CD4-positive, alpha-beta T cell (primary cell): ENCODE measurements at regions of chr20 and their contacts with region 1.

Region 1: GRCh38 chr20:62237801-62238571 is at the start of gene OSBPL2:
- DNase-seq: peak; percentile 100
- ATAC-seq: peak; percentile 98
- H3K4me3 ChIP-seq: peak within 1 kb of the TSS; percentile 64
- H3K4me3 Mint-ChIP-seq: peak within 1 kb of the TSS; percentile 92
- H3K27ac ChIP-seq: peak within 1 kb of the TSS; percentile 32 to 57
- H3K27ac Mint-ChIP-seq: peak within 1 kb of the TSS; percentile 95
- H3K4me1 ChIP-seq: peaks cover 36% of the 10 kb centered on the region
- H3K4me1 Mint-ChIP-seq: peaks cover 43% of the 10 kb centered on the region
- H3K27me3 ChIP-seq: no peaks in the 10 kb centered on the region
- H3K27me3 Mint-ChIP-seq: peaks cover 9% of the 10 kb centered on the region
- CTCF ChIP-seq: no peak
- total RNA-seq, gene OSBPL2: 52.8 to 54.4 TPM

Region 2: GRCh38 chr20:62065669-62066338 is 172.2 kb before region 1 on chr20 and contains the start of gene TAF4:
- CTCF ChIA-PET with region 1: no interaction called
- POLR2A ChIA-PET with region 1: interaction called, 4 read pairs
- intact Hi-C with region 1: loop called in 1 of 2 experiments (anchors 1 kb)
- DNase-seq: peak; percentile 58 to 95 (median 80)
- ATAC-seq: peak; percentile 74
- H3K4me3 ChIP-seq: peak within 1 kb of the TSS; percentile 77
- H3K4me3 Mint-ChIP-seq: peak within 1 kb of the TSS; percentile 96
- H3K27ac ChIP-seq: peak within 1 kb of the TSS; percentile 15 to 70
- H3K27ac Mint-ChIP-seq: peak within 1 kb of the TSS; percentile 98
- H3K4me1 ChIP-seq: peaks cover 46% of the 10 kb centered on the region
- H3K4me1 Mint-ChIP-seq: peaks cover 51% of the 10 kb centered on the region
- H3K27me3 ChIP-seq: no peaks in the 10 kb centered on the region
- H3K27me3 Mint-ChIP-seq: no peaks in the 10 kb centered on the region
- CTCF ChIP-seq: no peak
- total RNA-seq, gene TAF4: 11.1 to 12.5 TPM

Region 3: DNA sequence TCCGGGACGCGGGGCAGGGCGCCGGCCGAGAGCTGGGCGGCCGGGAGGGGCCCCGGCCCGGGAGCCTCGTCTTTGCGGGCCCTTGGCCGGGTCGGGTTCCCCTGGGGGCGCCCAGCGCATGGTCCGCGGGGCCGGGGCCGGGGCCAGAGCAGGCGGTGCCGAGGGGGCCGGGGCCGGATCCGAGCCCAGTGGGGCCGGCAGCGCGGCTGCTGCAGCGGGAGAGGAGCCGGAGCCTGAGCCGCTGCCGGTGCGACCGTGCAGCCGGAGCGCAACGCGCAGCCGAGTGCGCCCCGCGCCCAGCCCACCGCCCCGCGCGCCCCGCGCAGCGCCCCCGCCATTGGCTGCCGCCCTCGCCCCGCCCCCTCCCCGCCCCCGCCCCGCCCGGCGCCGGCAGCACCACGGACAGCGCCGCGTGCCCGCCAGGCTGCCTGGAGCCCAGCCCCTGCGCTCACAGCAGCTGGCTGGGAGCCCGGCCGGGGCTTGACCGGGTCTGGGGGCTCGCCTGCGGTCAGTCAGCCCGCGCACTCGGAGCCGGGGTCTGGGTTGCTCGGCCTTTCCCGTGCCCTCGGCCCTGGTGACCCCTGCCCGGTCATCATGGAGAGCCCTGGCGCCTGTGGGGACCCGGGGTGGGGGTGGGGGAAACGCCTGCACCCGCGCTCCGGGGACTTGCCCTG is 17.9 kb before region 1 on chr20 and contains the start of gene HRH3:
- CTCF ChIA-PET with region 1: no interaction called
- POLR2A ChIA-PET with region 1: no interaction called
- intact Hi-C with region 1: loop called in 1 of 2 experiments (anchors 2 kb)
- DNase-seq: peak in 13 of 14 experiments; percentile 13 to 74 (median 38)
- ATAC-seq: peak; percentile 89
- H3K4me3 ChIP-seq: no peak within 1 kb of the TSS
- H3K4me3 Mint-ChIP-seq: no peak within 1 kb of the TSS
- H3K27ac ChIP-seq: no peak within 1 kb of the TSS
- H3K27ac Mint-ChIP-seq: no peak within 1 kb of the TSS
- H3K4me1 ChIP-seq: peaks cover 16% of the 10 kb centered on the region
- H3K4me1 Mint-ChIP-seq: no peaks in the 10 kb centered on the region
- H3K27me3 ChIP-seq: peaks cover 52 to 55% of the 10 kb centered on the region in 2 experiments
- H3K27me3 Mint-ChIP-seq: peaks cover 54% of the 10 kb centered on the region
- CTCF ChIP-seq: no peak
- total RNA-seq, gene HRH3: not detected

Region 4: DNA sequence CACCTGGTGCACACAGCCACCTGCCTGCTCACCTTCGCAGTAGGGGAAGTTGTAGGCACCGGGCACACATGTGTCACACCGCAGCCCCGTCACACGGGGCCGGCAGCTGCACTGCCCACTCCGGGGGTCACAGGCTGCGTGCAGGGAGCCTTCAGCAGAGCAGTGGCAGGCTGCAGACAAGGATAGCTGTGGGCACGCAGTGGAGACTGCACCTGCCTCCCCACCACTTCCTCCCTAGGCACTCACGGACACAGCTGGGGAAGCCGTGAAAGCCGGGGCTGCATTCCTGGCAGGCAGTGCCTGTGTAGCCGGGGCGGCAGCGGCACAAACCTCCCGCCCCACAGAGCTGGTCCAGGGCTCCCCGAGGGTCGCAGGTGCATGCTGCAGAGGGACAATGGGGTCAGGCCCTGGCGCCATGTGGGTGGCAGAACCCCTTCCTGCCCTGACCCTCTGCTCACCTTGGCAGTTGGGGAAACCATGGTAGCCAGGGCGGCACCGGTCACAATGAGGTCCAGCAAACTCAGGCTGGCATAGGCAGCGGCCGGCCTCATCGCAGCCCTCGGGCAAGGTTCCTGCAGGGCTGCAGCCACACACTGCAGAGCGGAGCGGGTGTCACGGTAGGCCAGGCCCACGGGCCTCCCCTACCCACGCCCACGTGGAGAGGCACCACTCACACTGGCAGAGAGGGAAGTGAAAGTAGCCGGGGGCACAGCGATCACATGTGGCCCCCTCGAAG is 99.7 kb after region 1 on chr20:
- CTCF ChIA-PET with region 1: no interaction called
- POLR2A ChIA-PET with region 1: no interaction called
- intact Hi-C with region 1: no loop called
- DNase-seq: peak in 1 of 14 experiments; percentile 16
- ATAC-seq: no peak
- H3K4me3 ChIP-seq: no peak overlapping the region
- H3K4me3 Mint-ChIP-seq: no peak overlapping the region
- H3K27ac ChIP-seq: no peak overlapping the region
- H3K27ac Mint-ChIP-seq: no peak overlapping the region
- H3K4me1 ChIP-seq: no peaks in the 10 kb centered on the region
- H3K4me1 Mint-ChIP-seq: no peaks in the 10 kb centered on the region
- H3K27me3 ChIP-seq: peaks cover 0 to 2% of the 10 kb centered on the region in 2 experiments
- H3K27me3 Mint-ChIP-seq: peaks cover 22% of the 10 kb centered on the region
- CTCF ChIP-seq: no peak

Region 5: GRCh38 chr20:62386383-62387218 is 148.6 kb after region 1 on chr20 and contains the start of gene RPS21:
- CTCF ChIA-PET with region 1: no interaction called
- POLR2A ChIA-PET with region 1: no interaction called
- intact Hi-C with region 1: loop called in 1 of 2 experiments (anchors 2 kb)
- DNase-seq: peak; percentile 89 to 97 (median 92)
- ATAC-seq: peak; percentile 87
- H3K4me3 ChIP-seq: peak within 1 kb of the TSS; percentile 91
- H3K4me3 Mint-ChIP-seq: peak within 1 kb of the TSS; percentile 95
- H3K27ac ChIP-seq: peak within 1 kb of the TSS; percentile 84 to 94
- H3K27ac Mint-ChIP-seq: peak within 1 kb of the TSS; percentile 91
- H3K4me1 ChIP-seq: peaks cover 39% of the 10 kb centered on the region
- H3K4me1 Mint-ChIP-seq: peaks cover 58% of the 10 kb centered on the region
- H3K27me3 ChIP-seq: no peaks in the 10 kb centered on the region
- H3K27me3 Mint-ChIP-seq: no peaks in the 10 kb centered on the region
- CTCF ChIP-seq: no peak
- total RNA-seq, gene RPS21: 3,015 to 3,210 TPM

Region 6: DNA sequence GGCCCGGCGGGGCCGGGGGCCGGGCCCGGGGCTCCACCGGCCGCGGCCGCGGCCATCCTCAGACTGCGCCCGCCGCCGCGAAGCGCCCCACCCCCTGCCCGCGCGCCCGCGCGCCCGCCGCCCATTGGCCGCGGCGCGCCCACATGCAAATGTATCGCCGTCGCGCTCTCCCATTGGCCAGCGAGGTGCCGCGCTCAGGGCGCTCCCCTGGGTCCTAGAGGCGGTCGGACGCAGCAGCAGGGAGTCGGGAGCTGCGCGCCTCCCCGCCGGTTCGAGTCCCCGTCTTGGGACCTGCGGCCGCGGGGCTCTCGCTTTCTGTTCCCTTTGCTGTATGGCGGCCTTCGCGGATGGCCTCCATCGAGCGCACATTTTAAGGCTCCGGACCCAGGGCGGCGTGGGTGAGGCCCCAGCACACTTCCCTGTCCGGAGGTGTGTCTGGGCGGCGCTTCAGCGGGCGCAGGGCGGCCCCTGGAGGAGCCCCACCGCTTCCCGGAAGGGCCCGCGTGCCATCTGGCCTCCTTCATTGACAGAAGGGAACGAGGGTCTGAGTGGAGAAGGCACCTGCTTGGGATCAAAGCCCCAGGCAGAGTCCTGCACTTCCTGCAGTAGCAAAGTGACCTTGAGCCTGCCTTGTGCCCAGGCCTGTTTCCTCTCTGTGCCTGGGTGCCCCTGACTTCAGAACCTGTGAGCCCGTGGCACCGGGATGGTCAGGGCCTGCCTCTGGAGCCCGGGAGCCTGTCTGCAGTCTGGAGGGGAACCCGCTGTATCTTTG is 169.4 kb after region 1 on chr20 and contains the start of gene CABLES2:
- CTCF ChIA-PET with region 1: no interaction called
- POLR2A ChIA-PET with region 1: no interaction called
- intact Hi-C with region 1: loop called in 1 of 2 experiments (anchors 5 kb)
- DNase-seq: peak; percentile 83 to 96 (median 88)
- ATAC-seq: peak; percentile 95
- H3K4me3 ChIP-seq: peak within 1 kb of the TSS; percentile 72
- H3K4me3 Mint-ChIP-seq: peak within 1 kb of the TSS; percentile 84
- H3K27ac ChIP-seq: peak within 1 kb of the TSS in 1 of 2 donors; percentile 24
- H3K27ac Mint-ChIP-seq: no peak within 1 kb of the TSS
- H3K4me1 ChIP-seq: peaks cover 46% of the 10 kb centered on the region
- H3K4me1 Mint-ChIP-seq: peaks cover 18% of the 10 kb centered on the region
- H3K27me3 ChIP-seq: no peaks in the 10 kb centered on the region
- H3K27me3 Mint-ChIP-seq: no peaks in the 10 kb centered on the region
- CTCF ChIP-seq: no peak
- total RNA-seq, gene CABLES2: 4.4 TPM

Region 7: GRCh38 chr20:63216041-63216848 is 978.3 kb after region 1 on chr20 and contains the start of gene YTHDF1:
- CTCF ChIA-PET with region 1: no interaction called
- POLR2A ChIA-PET with region 1: no interaction called
- intact Hi-C with region 1: loop called in 1 of 2 experiments (anchors 5 kb)
- DNase-seq: peak; percentile 86 to 98 (median 94)
- ATAC-seq: peak; percentile 95
- H3K4me3 ChIP-seq: peak within 1 kb of the TSS; percentile 75
- H3K4me3 Mint-ChIP-seq: peak within 1 kb of the TSS; percentile 93
- H3K27ac ChIP-seq: peak within 1 kb of the TSS; percentile 44 to 70
- H3K27ac Mint-ChIP-seq: peak within 1 kb of the TSS; percentile 92
- H3K4me1 ChIP-seq: peaks cover 47% of the 10 kb centered on the region
- H3K4me1 Mint-ChIP-seq: peaks cover 48% of the 10 kb centered on the region
- H3K27me3 ChIP-seq: no peaks in the 10 kb centered on the region
- H3K27me3 Mint-ChIP-seq: no peaks in the 10 kb centered on the region
- CTCF ChIP-seq: no peak
- total RNA-seq, gene YTHDF1: 43.7 to 44.1 TPM